Colonic mucosa (tissue), 4 donors: ENCODE measurements at regions of chr10 and their contacts with region 1.

Region 1: GRCh38 chr10:117496616-117497028 is 45.9 kb upstream of the EMX2 start:
- DNase-seq: peak; percentile 79
- H3K4me3 ChIP-seq: no peak overlapping the region
- H3K27ac ChIP-seq: no peak overlapping the region
- H3K4me1 ChIP-seq: no peaks in the 10 kb centered on the region
- H3K27me3 ChIP-seq: no peaks in the 10 kb centered on the region
- CTCF ChIP-seq: peak; percentile 97

Region 2: DNA sequence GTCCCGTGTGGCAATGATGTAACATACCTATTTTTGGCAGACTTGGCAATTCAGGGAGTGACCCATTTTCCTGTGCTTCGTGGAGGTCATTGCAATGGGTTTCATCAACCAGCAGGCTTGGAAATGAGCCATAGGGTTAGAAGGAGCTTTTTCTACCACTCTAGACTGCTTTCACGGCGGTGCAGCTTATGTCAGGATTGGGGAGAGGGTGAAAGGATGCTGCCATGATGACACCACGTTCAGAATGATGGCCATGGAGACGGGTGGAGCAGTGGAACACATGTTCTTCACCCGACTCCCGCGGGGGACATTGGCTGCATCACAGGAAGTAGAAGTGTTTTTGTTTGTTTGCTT is 266.2 kb after region 1 on chr10:
- intact Hi-C with region 1: no loop called
- DNase-seq: no peak
- H3K4me3 ChIP-seq: no peak overlapping the region
- H3K27ac ChIP-seq: no peak overlapping the region
- H3K4me1 ChIP-seq: no peaks in the 10 kb centered on the region
- H3K27me3 ChIP-seq: no peaks in the 10 kb centered on the region
- CTCF ChIP-seq: no peak

Region 3: GRCh38 chr10:118241229-118242137 is 744.9 kb after region 1 on chr10:
- intact Hi-C with region 1: loop called (anchors 2 kb)
- DNase-seq: peak; percentile 82
- H3K4me3 ChIP-seq: no peak overlapping the region
- H3K27ac ChIP-seq: no peak overlapping the region
- H3K4me1 ChIP-seq: no peaks in the 10 kb centered on the region
- H3K27me3 ChIP-seq: peaks cover 3% of the 10 kb centered on the region
- CTCF ChIP-seq: peak; percentile 90

Region 4: DNA sequence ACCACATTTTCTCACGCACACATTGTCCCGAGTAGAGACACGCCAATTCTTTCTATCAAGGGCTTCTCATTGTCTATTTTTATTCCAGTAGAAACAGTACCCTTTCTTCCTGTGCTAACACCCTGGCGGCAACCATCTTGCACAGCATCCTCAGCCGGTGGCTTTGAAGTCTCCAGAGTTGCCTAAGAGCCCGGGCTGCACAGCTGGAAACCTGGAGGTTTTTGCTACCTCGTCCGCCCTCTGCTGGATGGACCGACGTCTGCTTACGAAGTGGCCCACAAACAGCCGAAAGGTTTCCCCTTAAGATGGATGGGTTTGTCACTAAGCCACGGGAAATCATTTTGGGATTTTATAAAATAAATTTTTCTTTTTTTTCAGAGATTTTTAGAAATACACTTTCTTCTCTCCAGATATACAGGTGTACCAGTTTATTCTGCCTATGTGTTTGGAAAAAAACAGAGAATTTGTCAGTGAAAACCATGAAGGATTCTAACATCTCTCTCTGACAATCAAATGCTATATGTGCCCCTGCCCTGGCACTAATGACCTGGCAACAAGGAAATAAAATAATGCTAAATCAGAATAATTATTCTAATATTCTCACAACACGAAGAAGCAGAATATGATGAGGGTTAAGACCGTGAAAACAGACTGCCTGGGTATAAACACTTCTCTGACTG is 927.3 kb after region 1 on chr10:
- intact Hi-C with region 1: loop called (anchors 10 kb)
- DNase-seq: peak; percentile 73
- H3K4me3 ChIP-seq: no peak overlapping the region
- H3K27ac ChIP-seq: no peak overlapping the region
- H3K4me1 ChIP-seq: no peaks in the 10 kb centered on the region
- H3K27me3 ChIP-seq: no peaks in the 10 kb centered on the region
- CTCF ChIP-seq: peak; percentile 70

Region 5: DNA sequence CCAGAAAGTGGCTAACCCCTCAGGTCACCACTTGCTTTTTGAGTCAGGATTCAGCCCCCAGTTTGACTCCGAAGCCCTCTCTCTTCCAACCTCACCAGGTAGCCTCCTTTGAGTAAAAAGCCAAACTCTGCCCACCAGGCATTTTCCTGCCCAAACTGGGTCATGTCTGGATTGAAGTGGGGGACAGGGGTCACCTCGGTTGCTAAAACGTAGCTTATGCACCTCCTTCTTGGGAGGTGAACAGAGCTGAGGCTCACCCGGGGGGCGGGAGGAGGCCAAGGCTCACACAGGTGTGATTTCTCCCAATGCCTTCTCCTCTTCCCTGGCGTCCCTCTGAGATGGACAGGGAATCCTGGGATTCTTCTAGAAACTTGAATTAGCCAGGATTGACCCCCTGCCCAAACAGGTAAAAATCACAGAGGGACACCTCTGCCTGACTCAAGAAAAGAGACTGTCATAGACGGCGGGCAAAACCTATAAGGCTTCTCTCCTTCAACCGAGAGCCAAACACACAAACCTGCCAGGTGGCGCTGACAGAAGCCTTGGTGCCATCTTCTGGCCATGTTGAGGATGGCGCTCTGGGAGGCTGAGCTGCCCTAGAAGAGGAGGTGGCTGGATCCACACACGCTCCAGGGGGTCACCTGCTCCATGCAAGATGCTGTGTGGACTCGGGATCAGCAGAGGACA is 1047.2 kb after region 1 on chr10:
- intact Hi-C with region 1: loop called (anchors 10 kb)
- DNase-seq: peak; percentile 44
- H3K4me3 ChIP-seq: no peak overlapping the region
- H3K27ac ChIP-seq: no peak overlapping the region
- H3K4me1 ChIP-seq: no peaks in the 10 kb centered on the region
- H3K27me3 ChIP-seq: no peaks in the 10 kb centered on the region
- CTCF ChIP-seq: peak; percentile 48